ENCODE measurements at regions of chr12 and their contacts with region 1.

Region 1: DNA sequence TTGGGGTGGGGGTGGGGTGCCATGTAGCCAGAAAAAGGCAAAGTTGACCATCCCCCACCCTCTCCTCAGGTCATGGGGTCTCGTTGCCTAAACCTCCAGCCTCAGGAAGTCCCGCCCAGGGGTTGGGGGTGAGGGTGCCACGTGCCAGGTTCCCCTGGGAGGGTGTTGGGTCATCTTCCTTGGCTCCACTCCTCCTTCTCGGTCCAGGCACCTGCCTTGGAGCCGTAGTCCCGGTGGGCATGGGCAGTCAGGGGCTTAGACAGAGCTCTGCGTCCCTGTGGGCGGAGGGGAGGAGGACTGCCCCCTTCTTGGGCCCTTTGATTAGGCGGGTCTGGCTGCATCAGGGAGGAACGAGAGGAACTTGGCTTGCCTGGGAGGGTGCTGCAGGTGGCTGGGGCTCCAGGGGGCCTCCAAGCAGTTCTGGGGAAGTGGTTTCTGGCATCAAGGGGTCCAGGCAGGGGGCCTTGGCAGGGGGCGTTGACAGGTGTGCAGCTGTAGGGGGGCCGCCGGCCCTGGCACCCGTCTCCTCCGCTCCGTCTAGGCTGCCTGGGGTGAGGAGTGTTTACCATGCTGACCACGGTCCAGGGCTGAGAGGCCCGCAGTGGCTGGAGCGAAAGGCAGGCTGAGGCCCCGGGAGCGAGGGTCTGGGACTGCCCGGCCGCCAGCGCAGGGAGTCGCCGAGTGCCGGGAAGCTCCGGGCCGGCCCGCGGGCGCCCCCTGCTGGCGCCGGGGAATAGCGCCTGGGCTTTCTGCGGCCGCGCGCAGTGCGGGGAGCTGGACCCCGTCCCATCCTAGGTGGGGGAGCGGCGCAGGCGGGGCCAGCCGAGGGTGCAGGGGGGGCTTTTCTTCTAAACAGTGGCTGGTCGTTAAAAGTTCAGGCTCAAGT is 7.9 kb downstream of the SETD1B start:
- DNase-seq: peak; percentile 67
- ATAC-seq: peak; percentile 84
- H3K4me3 Mint-ChIP-seq: peak overlapping the region; percentile 74
- H3K27ac Mint-ChIP-seq: peak overlapping the region; percentile 79
- H3K4me1 Mint-ChIP-seq: peaks cover 37% of the 10 kb centered on the region
- H3K27me3 Mint-ChIP-seq: no peaks in the 10 kb centered on the region
- CTCF ChIP-seq: peak; percentile 99

Region 2: DNA sequence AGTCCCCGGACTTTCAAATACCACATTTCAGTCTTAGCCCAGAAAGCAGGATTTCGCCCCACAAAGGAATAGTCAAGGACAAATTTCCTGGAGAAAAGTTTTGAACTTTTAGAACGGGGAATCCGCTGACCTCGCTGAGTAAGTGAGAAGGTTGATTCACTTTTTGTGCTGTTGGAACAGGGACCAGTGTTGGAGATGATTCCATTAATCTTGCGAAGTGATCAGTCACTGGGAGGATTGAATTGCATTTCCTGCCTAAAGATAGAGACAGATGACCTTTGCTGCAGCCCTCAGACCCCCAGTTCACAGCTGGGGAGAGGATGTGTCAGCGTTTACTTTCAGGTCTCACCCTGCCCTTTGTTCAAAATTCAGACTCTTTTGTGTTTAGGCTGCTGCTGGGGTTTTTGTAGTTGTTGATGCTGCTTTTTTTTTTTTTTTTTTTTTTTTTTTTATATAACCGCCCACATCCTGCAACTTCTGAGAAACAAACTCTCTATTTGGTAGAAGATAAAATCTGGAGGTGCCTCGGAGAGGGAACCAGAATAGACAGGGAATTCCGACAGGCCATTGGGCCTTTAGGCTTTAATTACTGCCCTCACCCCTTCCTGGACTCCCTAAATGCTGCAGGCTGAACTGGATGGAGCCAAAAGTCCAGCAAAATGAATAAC is 221.1 kb before region 1 on chr12:
- CTCF ChIA-PET with region 1: no interaction called
- POLR2A ChIA-PET with region 1: no interaction called
- intact Hi-C with region 1: no loop called
- DNase-seq: peak; percentile 88
- ATAC-seq: peak; percentile 91
- H3K4me3 Mint-ChIP-seq: peak overlapping the region; percentile 73
- H3K27ac Mint-ChIP-seq: peak overlapping the region; percentile 95
- H3K4me1 Mint-ChIP-seq: peaks cover 37% of the 10 kb centered on the region
- H3K27me3 Mint-ChIP-seq: no peaks in the 10 kb centered on the region
- CTCF ChIP-seq: no peak

Region 3: GRCh38 chr12:121712461-121713256 is 99.0 kb before region 1 on chr12 and contains the start of gene TMEM120B:
- CTCF ChIA-PET with region 1: interaction called, 12 read pairs
- POLR2A ChIA-PET with region 1: interaction called, 3 read pairs
- intact Hi-C with region 1: no loop called
- DNase-seq: peak; percentile 80
- ATAC-seq: peak; percentile 90
- H3K4me3 Mint-ChIP-seq: peak within 1 kb of the TSS; percentile 84
- H3K27ac Mint-ChIP-seq: peak within 1 kb of the TSS; percentile 78
- H3K4me1 Mint-ChIP-seq: peaks cover 16% of the 10 kb centered on the region
- H3K27me3 Mint-ChIP-seq: no peaks in the 10 kb centered on the region
- CTCF ChIP-seq: no peak
- total RNA-seq, gene TMEM120B: 11.7 to 12.7 TPM

Region 4: GRCh38 chr12:121786441-121786825 is 25.2 kb before region 1 on chr12:
- CTCF ChIA-PET with region 1: interaction called, 698 read pairs
- POLR2A ChIA-PET with region 1: interaction called, 683 read pairs
- intact Hi-C with region 1: no loop called
- DNase-seq: peak; percentile 66
- ATAC-seq: no peak
- H3K4me3 Mint-ChIP-seq: peak overlapping the region; percentile 58
- H3K27ac Mint-ChIP-seq: peak overlapping the region; percentile 100
- H3K4me1 Mint-ChIP-seq: peaks cover 79% of the 10 kb centered on the region
- H3K27me3 Mint-ChIP-seq: no peaks in the 10 kb centered on the region
- CTCF ChIP-seq: no peak